Head of caudate nucleus (tissue), 42 donors: ENCODE measurements at regions of chr2 and their contacts with region 1.

Region 1: DNA sequence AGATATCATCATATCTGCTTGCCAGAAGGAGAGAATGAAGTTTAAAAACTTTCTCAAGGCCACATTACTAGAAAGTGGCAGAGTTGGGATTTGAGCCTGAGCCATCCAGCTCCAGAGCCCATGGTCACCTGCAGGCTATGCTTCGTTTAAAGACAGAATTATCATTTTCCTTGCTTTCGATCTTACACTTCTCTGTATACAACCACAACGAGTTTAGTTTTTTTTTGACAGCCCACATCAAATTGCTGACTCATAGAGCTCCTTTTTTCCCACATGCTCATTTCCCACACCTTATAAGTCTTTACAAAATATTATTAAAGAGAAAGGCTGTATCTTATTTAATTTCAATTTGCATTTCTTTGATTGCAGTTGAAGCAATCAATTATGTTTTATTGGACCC is 6.5 kb downstream of the PLEK start:
- DNase-seq: no peak

Region 2: GRCh38 chr2:68434981-68435380 is 63.4 kb after region 1 on chr2:
- intact Hi-C with region 1: loop called (anchors 5 kb)
- DNase-seq: no peak